Activated CD4-positive, alpha-beta memory T cell treated with anti-CD3 and anti-CD28 coated beads for 36 hours (primary cell): ENCODE measurements at regions of chr6 and their contacts with region 1.

Region 1: GRCh38 chr6:166032366-166033171 is 135.1 kb downstream of the TBXT start:
- DNase-seq: no peak
- H3K4me3 Mint-ChIP-seq: no peak overlapping the region
- H3K27ac Mint-ChIP-seq: no peak overlapping the region
- H3K4me1 Mint-ChIP-seq: no peaks in the 10 kb centered on the region
- H3K27me3 Mint-ChIP-seq: no peaks in the 10 kb centered on the region

Region 2: DNA sequence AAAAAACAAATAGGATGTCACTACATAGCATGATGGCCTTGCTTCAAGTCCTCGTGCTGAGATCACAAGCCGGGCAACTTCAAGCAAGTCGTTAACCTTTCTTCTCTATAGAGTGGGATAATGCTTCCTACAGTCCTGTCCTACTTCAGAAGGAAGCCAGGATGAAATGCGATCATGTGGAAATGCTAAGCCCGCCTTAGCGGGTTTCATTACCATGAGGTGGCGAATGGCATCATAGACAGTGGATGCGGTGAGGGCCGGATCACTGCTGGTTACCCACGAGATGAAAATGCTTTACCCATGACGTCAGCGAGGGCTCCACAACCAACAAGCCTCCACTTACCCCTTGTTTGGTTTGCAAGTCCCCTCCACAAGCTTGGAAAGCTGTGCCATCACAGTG is 71.3 kb before region 1 on chr6:
- CTCF ChIA-PET with region 1: no interaction called
- POLR2A ChIA-PET with region 1: no interaction called
- intact Hi-C with region 1: no loop called
- DNase-seq: no peak
- H3K4me3 Mint-ChIP-seq: no peak overlapping the region
- H3K27ac Mint-ChIP-seq: no peak overlapping the region
- H3K4me1 Mint-ChIP-seq: no peaks in the 10 kb centered on the region
- H3K27me3 Mint-ChIP-seq: peaks cover 2% of the 10 kb centered on the region

Region 3: DNA sequence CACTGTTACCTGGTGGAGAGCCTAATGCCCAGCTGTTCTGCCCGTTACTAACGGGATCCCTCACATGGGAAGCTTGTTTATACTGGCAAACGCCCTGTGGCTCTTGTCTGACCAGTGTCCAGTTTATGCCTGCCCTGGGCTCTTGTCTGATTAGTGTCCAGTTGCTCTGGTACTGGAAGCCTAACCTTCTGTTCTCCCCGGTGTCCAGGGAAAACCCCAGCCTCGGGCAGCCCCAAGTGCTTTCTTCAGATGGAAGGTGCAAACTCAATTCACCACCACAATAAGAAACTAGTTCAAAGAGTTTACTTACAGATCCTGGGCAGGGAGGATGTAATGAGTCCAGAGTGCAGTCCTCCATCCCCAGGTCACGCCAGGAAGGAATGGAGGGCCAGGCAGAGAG is 13.4 kb before region 1 on chr6:
- CTCF ChIA-PET with region 1: no interaction called
- POLR2A ChIA-PET with region 1: no interaction called
- intact Hi-C with region 1: no loop called
- DNase-seq: no peak
- H3K4me3 Mint-ChIP-seq: no peak overlapping the region
- H3K27ac Mint-ChIP-seq: no peak overlapping the region
- H3K4me1 Mint-ChIP-seq: no peaks in the 10 kb centered on the region
- H3K27me3 Mint-ChIP-seq: no peaks in the 10 kb centered on the region

Region 4: DNA sequence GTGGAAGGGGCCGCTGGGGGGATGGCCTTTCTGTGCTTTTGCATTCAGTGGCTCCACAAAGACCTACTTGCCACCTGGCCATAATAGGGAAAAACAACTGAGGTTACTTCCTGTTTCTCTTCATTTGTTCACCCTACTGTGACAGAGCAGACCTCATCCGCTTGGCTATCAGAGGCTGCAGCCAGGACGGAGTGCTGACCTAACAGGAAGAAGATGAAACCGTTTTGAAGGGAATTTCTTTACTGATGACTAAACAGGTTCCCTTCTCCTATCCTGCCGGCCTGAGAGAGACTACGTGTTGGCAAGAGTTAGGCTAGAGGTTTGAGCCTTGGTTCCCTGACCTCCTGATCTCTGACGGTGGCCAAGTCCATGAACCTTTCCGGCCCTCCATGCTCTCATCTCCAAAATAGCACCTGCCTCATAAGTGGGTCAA is 254.3 kb after region 1 on chr6:
- CTCF ChIA-PET with region 1: no interaction called
- POLR2A ChIA-PET with region 1: no interaction called
- intact Hi-C with region 1: loop called (anchors 5 kb)
- DNase-seq: no peak
- H3K4me3 Mint-ChIP-seq: no peak overlapping the region
- H3K27ac Mint-ChIP-seq: no peak overlapping the region
- H3K4me1 Mint-ChIP-seq: no peaks in the 10 kb centered on the region
- H3K27me3 Mint-ChIP-seq: peaks cover 6% of the 10 kb centered on the region